ENCODE measurements at regions of chr2 and their contacts with region 1.

Region 1: GRCh38 chr2:84077492-84077891 is 381.6 kb downstream of the SUCLG1 start:
- DNase-seq: peak in 1 of 10 donors; percentile 33
- H3K4me3 ChIP-seq: no peak overlapping the region
- H3K27ac ChIP-seq: no peak overlapping the region
- H3K27me3 ChIP-seq: peaks cover 0 to 5% (median 0%) of the 10 kb centered on the region in 45 donors
- CTCF ChIP-seq: peak in 54 of 56 donors; percentile 20 to 69 (median 46)

Region 2: DNA sequence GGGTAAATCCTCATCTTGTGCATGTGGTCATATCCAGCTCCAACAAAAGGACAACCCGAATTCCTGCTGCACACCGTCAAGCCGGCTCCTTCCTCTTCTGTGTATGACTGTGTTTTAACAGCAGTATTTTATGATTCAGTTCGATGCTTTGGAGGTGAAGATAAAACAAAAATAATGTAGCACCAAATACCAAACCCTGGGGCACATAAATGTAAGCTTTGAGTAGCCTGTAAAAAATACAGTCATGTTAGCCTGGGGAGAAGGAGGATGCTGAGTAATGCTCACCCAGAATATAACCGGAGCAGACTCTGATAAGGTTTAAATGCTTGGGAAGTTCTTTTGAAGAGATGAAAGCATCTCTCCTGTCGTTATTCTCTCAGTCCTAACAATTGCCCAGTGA is 156.6 kb after region 1 on chr2:
- intact Hi-C with region 1: no loop called
- DNase-seq: no peak
- H3K4me3 ChIP-seq: no peak overlapping the region
- H3K27ac ChIP-seq: peak overlapping the region in 5 of 59 donors; percentile 9 to 95 (median 88)
- H3K27me3 ChIP-seq: no peaks in the 10 kb centered on the region
- CTCF ChIP-seq: no peak

Region 3: GRCh38 chr2:84257831-84258230 is 180.3 kb after region 1 on chr2:
- intact Hi-C with region 1: loop called in 1 of 2 experiments (anchors 5 kb)
- DNase-seq: no peak
- H3K4me3 ChIP-seq: no peak overlapping the region
- H3K27ac ChIP-seq: no peak overlapping the region
- H3K27me3 ChIP-seq: peaks cover 0 to 6% (median 0%) of the 10 kb centered on the region in 45 donors
- CTCF ChIP-seq: peak in 52 of 56 donors; percentile 25 to 69 (median 49)

Region 4: DNA sequence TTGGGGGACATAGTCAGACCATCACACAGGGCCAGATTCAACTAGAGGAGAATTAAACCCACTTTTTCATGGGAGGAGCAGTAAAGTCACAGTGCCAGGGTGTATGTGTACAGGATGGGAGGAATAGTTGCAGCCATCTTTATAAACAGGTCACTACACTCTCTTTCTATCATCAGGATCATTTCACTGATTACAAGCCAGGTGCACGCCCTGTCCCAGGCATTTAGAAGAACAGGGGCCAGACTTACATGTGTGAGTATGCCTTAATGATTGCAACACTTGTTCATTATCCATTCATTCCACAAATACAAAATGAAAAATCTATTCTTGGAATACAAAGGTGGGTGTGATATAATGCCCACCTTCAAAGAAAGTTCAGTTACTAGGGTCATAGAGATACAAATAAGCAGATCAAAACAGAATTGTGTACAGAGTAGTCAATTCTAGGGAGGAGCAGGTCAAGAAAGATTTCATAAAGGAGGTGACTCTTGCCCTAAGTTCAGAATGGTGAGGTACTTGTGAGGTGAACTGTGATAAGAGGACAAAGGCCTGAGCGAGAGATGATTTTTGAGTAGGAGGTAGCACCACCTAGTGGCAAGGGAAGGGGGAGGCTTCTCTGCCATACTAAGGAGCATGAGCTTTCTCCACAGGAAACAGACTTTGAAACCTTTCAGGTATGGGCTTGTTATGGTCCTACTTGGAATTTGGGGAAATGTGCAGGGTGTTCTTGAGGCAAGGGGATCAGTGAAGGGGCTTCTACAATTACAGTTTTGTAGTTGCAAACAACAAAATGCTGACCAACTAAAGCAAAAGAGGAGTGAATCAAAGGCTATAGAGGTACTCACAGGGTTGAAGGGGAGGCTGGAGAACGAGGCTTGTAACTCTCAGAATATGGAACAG is 225.3 kb after region 1 on chr2:
- intact Hi-C with region 1: loop called in 1 of 2 experiments (anchors 5 kb)
- DNase-seq: peak in 7 of 10 donors; percentile 8 to 58 (median 41)
- H3K4me3 ChIP-seq: no peak overlapping the region
- H3K27ac ChIP-seq: no peak overlapping the region
- H3K27me3 ChIP-seq: peaks cover 0 to 8% (median 0%) of the 10 kb centered on the region in 45 donors
- CTCF ChIP-seq: peak; percentile 50 to 93 (median 83)